ENCODE measurements at regions of chr5 and their contacts with region 1.

Region 1: GRCh38 chr5:168987543-168988300 is 313.2 kb downstream of the SLIT3 start:
- DNase-seq: peak; percentile 64 to 92 (median 79)
- H3K4me3 ChIP-seq: no peak overlapping the region
- H3K27ac ChIP-seq: no peak overlapping the region
- H3K4me1 ChIP-seq: peaks cover 0 to 7% of the 10 kb centered on the region in 2 donors
- H3K27me3 ChIP-seq: no peaks in the 10 kb centered on the region
- CTCF ChIP-seq: peak; percentile 81 to 95 (median 90)
- POLR2A ChIP-seq: no peak

Region 2: DNA sequence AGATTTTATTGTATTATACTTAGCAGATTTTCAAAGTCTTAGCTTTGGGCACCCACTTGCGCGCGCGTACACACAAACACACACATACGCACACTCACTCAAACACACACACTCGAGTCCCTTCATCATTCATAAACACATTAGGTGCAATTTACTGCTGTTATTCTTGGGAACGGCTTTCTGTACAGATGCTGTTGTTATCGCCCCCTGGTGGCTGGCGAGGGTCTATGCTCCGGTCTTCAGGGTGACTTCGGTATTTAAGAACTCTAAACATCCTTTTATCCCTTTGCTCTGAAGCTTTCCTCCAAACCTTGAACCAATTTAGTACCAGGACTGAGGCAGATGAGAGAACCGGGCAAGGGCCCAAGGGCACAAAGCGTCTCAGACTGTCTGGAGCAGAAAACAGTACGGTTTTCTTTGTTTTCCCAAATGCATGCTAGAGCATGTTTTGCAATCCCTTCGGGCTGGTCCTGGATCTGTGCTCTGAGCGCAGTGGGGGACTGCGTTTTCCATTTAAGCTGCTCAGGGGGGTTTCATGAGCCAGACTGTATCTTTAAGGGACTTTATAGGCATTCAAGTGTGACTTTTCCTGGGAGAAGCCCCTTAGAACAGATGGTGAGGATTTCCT is 314.9 kb after region 1 on chr5:
- intact Hi-C with region 1: loop called (anchors 2 to 5 kb)
- DNase-seq: peak; percentile 71 to 91 (median 77)
- H3K4me3 ChIP-seq: no peak overlapping the region
- H3K27ac ChIP-seq: no peak overlapping the region
- H3K4me1 ChIP-seq: no peaks in the 10 kb centered on the region
- H3K27me3 ChIP-seq: peaks cover 4% of the 10 kb centered on the region
- CTCF ChIP-seq: peak; percentile 72 to 92 (median 86)
- POLR2A ChIP-seq: no peak

Region 3: DNA sequence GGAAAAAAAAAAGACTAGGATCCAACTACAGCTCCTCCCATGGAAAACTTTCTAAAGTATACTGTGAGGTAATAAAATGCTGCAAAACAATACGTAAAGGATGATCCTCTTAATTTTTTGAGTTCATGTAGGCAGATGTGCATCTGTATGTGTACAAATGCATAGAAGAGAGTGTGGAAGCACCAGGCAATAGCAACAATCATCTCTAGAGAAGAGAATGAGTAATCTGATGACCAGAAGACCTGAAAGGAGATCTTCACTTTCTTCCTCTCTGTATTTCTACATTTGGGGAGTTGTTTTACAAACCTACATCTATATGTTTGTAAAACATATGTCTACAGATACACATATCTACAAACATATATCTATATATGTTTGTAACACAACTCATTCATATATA is 566.5 kb after region 1 on chr5:
- intact Hi-C with region 1: loop called in 1 of 2 experiments (anchors 10 kb)
- DNase-seq: no peak
- H3K4me3 ChIP-seq: no peak overlapping the region
- H3K27ac ChIP-seq: no peak overlapping the region
- H3K4me1 ChIP-seq: no peaks in the 10 kb centered on the region
- H3K27me3 ChIP-seq: no peaks in the 10 kb centered on the region
- CTCF ChIP-seq: no peak
- POLR2A ChIP-seq: no peak

Region 4: DNA sequence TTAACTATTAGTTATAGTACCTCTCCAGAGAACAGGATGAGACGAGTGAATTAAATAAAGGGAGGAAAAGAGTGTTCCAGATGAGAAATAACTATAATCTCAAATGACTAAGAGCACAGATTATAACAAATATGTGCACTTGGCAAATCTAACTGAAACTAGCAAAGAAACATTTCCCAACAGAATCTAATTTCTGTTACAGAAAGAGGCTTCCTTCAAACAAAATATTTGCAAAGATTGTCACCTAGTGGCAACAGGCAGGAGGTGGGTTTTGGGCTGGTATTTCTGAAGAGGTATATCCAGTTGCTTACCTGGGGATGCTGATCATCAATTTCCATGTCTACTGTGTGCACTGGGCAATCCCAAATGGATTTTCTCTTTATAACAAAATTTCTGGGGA is 590.2 kb after region 1 on chr5:
- intact Hi-C with region 1: loop called in 1 of 2 experiments (anchors 10 kb)
- DNase-seq: no peak
- H3K4me3 ChIP-seq: no peak overlapping the region
- H3K27ac ChIP-seq: no peak overlapping the region
- H3K4me1 ChIP-seq: peaks cover 0 to 11% of the 10 kb centered on the region in 2 donors
- H3K27me3 ChIP-seq: no peaks in the 10 kb centered on the region
- CTCF ChIP-seq: peak in 4 of 6 experiments; percentile 30 to 37 (median 34)
- POLR2A ChIP-seq: no peak

Measured in adrenal gland (tissue), 19 donors.